Left cardiac atrium (tissue), 4 donors: ENCODE measurements at regions of chr19 and their contacts with region 1.

Region 1: GRCh38 chr19:45178262-45179071 is at the start of gene BLOC1S3:
- DNase-seq: peak; percentile 100
- ATAC-seq: peak; percentile 94 to 97
- total RNA-seq, gene BLOC1S3: 6.1 to 7.0 TPM

Region 2: DNA sequence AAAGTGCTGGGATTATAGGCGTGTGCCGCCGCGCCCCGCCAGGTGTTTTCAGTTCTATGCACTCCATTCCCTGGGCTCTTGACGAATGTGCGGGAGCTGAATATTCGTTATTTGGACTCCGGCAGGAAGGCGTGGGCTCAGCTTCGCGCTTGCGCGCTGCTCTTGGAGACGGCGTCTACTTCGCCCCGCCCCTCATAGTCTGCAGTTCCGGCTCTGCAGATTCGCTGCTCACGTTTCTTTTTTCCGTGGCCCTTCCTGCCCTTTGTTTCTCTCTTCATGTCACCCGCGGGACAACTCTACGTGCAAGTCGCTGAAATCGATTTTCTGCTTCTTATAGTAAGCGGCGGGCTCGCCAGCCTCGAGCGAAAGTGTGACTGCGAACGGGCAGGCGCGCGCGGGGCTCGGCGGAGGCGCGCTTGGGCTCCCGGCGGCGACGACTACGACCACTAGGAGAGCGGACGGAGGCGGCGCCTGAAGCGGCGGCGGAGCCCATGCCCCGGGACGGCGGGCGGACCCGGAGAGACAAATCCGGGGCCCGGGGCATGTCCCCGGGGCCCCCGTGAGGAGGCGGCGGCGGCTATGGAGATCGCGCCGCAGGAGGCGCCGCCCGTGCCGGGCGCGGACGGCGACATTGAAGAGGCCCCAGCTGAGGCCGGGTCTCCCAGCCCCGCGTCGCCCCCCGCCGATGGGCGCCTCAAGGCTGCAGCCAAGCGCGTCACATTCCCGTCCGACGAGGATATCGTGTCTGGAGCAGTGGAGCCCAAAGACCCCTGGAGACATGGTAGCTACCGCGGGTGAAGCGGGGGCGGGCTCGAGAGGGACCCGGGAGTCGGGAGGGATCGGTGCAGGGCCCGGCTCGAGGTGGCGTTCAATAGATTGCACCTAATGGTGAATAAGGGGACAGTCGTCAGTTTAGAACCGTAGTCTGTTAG is 85.5 kb before region 1 on chr19 and contains the start of gene PPP1R37:
- intact Hi-C with region 1: loop called in 1 of 2 experiments (anchors 5 kb)
- DNase-seq: peak; percentile 96
- ATAC-seq: peak; percentile 91 to 93
- total RNA-seq, gene PPP1R37: 19.4 to 21.4 TPM

Region 3: DNA sequence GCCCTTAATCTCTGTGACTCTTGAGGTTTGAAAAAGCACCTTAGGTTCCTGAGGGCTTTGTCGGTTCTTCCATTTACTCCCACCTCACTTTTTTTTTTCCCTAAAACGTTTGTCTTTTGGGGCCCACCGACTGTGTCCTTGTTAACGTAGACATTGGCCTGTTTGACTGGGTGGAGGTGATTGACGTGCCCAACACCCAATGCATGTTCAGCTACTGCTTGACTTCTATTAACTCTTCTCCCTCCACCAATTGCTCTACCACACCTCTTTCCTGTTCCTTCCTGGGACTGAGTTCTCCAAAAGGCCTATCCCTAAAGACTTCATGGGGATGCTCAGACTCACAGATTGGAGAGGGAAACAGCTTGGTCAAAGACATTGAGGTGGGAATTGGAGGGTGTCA is 127.0 kb after region 1 on chr19:
- intact Hi-C with region 1: no loop called
- DNase-seq: no peak
- ATAC-seq: no peak

Region 4: DNA sequence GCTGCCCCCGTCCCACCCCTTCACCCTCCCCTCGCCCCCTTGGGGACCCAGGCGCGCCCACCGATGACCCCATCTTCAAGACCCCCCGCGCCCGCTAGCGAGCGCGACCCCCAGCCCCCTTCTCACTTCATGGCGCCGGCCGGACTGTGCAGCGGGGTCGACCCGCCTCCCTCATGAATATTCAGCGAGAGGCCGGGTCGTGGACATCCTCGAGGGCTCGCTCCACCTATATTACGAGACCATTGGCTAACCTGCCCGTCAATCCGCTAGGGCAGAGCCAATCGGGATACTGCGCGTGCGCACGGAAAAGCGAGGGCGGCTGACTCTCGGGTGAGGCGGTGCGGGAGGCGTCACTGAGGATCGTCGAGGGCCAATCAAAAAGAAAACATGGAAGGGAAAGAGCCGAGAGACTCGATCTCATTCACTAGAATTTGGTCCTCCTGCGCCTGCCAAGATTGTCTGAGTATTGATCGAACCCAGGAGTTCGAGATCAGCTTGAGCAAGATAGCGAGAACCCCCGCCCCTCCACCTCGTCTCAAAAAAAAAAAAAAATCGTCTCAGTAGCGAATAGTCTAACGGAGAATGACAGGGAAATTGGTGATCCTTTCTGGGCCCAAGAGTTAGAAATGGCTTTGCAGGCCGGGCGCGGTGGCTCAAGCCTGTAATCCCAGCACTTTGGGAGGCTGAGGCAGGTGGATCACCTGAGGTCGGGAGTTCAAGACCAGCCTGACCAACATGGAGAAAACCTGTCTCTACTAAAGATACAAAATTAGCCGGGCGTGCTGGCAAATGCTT is 192.1 kb after region 1 on chr19 and contains the start of gene ERCC2:
- intact Hi-C with region 1: no loop called
- DNase-seq: peak; percentile 99
- ATAC-seq: peak; percentile 99 to 100
- total RNA-seq, gene ERCC2: 12.7 to 13.0 TPM